Activated CD8-positive, alpha-beta T cell treated with anti-CD3 and anti-CD28 coated beads for 36 hours (primary cell): ENCODE measurements at regions of chr1 and their contacts with region 1.

Region 1: GRCh38 chr1:93021539-93022134 is 57.4 kb upstream of the MTF2 start:
- DNase-seq: no peak
- ATAC-seq: peak; percentile 95
- H3K4me3 Mint-ChIP-seq: no peak overlapping the region
- H3K27ac Mint-ChIP-seq: no peak overlapping the region
- H3K4me1 Mint-ChIP-seq: no peaks in the 10 kb centered on the region
- H3K27me3 Mint-ChIP-seq: peaks cover 3% of the 10 kb centered on the region
- CTCF ChIP-seq: peak; percentile 88

Region 2: GRCh38 chr1:92599184-92599583 is 422.5 kb before region 1 on chr1:
- CTCF ChIA-PET with region 1: no interaction called
- POLR2A ChIA-PET with region 1: no interaction called
- intact Hi-C with region 1: no loop called
- DNase-seq: no peak
- ATAC-seq: peak; percentile 61
- H3K4me3 Mint-ChIP-seq: no peak overlapping the region
- H3K27ac Mint-ChIP-seq: no peak overlapping the region
- H3K4me1 Mint-ChIP-seq: peaks cover 40% of the 10 kb centered on the region
- H3K27me3 Mint-ChIP-seq: no peaks in the 10 kb centered on the region
- CTCF ChIP-seq: peak; percentile 74

Region 3: GRCh38 chr1:92709738-92710137 is 311.9 kb before region 1 on chr1:
- CTCF ChIA-PET with region 1: no interaction called
- POLR2A ChIA-PET with region 1: no interaction called
- intact Hi-C with region 1: no loop called
- DNase-seq: no peak
- ATAC-seq: no peak
- H3K4me3 Mint-ChIP-seq: no peak overlapping the region
- H3K27ac Mint-ChIP-seq: no peak overlapping the region
- H3K4me1 Mint-ChIP-seq: no peaks in the 10 kb centered on the region
- H3K27me3 Mint-ChIP-seq: peaks cover 2% of the 10 kb centered on the region
- CTCF ChIP-seq: no peak

Region 4: GRCh38 chr1:93056214-93056613 is 34.6 kb after region 1 on chr1:
- CTCF ChIA-PET with region 1: interaction called, 96 read pairs
- POLR2A ChIA-PET with region 1: interaction called, 3 read pairs
- intact Hi-C with region 1: no loop called
- DNase-seq: peak; percentile 44
- ATAC-seq: no peak
- H3K4me3 Mint-ChIP-seq: no peak overlapping the region
- H3K27ac Mint-ChIP-seq: no peak overlapping the region
- H3K4me1 Mint-ChIP-seq: no peaks in the 10 kb centered on the region
- H3K27me3 Mint-ChIP-seq: peaks cover 3% of the 10 kb centered on the region
- CTCF ChIP-seq: no peak

Region 5: DNA sequence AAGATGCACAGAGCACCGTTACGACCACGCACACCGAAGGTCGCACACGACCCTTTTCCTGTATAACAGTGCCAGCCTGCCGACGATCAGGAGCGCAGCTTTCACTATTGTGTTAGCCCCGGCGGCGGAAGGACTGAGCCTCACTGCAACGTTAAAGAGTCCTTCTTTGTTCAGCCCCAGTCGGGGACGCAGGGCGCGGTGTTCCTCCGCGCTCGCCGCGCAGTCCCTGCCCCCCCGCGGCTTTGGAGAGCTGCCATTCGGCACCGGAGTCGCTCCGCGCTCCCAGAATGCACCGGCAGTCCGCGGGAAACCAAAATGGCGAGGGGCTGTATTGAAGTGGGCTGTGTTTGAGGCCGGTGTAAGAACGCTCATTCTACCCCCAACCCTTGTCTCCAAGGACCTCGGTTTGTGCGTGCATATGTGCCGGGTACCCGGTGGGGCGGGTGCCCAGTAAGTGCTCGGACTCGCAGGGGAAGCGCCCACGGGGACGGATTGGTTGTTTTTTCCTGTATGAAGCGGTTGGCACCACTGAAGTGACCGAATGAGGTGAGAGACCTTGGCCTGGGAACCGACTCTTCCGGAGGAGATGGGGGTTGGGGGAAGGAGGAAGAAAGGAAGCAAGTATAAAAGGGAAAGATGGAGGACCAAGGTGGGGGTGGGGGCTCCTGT is 57.5 kb after region 1 on chr1 and contains the start of gene MTF2:
- CTCF ChIA-PET with region 1: interaction called, 14 read pairs
- POLR2A ChIA-PET with region 1: interaction called, 9 read pairs
- intact Hi-C with region 1: no loop called
- DNase-seq: peak; percentile 96
- ATAC-seq: peak; percentile 93
- H3K4me3 Mint-ChIP-seq: peak within 1 kb of the TSS; percentile 99
- H3K27ac Mint-ChIP-seq: peak within 1 kb of the TSS; percentile 97
- H3K4me1 Mint-ChIP-seq: peaks cover 34% of the 10 kb centered on the region
- H3K27me3 Mint-ChIP-seq: no peaks in the 10 kb centered on the region
- CTCF ChIP-seq: no peak
- total RNA-seq, gene MTF2: 65.0 to 70.9 TPM

Region 6: DNA sequence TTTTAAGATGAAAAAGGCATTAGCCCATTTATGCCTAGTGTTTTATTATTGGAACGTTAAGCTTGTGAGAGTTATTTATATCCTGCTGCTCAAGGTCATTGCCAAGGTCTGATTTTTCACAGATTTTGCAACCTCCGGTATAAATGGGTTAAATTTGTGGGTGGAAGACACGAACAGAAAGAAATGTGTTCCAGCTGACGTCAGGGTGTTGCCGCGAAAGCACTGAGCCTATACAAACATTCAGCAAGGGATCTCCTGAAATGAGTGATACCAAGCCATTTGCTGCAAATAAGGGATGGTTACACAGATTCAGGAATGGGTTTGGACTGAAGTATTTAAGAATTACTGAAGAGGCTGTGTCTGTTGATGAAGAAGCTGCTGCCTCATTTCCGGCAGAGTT is 126.4 kb after region 1 on chr1:
- CTCF ChIA-PET with region 1: interaction called, 3 read pairs
- POLR2A ChIA-PET with region 1: no interaction called
- intact Hi-C with region 1: loop called (anchors 10 kb)
- DNase-seq: no peak
- ATAC-seq: no peak
- H3K4me3 Mint-ChIP-seq: no peak overlapping the region
- H3K27ac Mint-ChIP-seq: peak overlapping the region; percentile 63
- H3K4me1 Mint-ChIP-seq: peaks cover 7% of the 10 kb centered on the region
- H3K27me3 Mint-ChIP-seq: no peaks in the 10 kb centered on the region
- CTCF ChIP-seq: no peak